Endothelial cell of umbilical vein (primary cell): ENCODE measurements at regions of chr15 and their contacts with region 1.

Region 1: DNA sequence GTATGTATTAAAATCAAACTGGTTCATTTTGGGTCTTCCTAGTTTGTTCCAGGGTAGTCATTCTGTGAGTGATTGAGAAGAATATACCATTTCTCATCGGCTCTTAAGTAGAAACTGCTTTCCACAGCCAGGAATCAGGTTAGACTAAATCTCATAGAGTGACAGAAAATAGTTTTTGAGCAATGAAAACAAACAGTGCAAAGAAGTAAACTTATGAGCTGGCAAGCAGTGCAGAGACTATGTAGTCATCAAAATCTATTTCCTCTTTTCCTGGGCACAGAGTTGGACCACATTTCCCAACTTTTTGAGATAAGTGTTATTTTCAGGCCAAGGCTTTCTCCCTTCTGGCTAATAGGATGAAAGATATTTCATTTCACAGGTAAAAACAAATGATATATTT is 66.5 kb downstream of the UBE3A start:
- DNase-seq: peak; percentile 55
- H3K4me3 ChIP-seq: no peak overlapping the region
- H3K27ac ChIP-seq: no peak overlapping the region
- H3K4me1 ChIP-seq: peaks cover 20% of the 10 kb centered on the region
- H3K27me3 ChIP-seq: no peaks in the 10 kb centered on the region
- CTCF ChIP-seq: no peak
- POLR2A ChIP-seq: no peak

Region 2: DNA sequence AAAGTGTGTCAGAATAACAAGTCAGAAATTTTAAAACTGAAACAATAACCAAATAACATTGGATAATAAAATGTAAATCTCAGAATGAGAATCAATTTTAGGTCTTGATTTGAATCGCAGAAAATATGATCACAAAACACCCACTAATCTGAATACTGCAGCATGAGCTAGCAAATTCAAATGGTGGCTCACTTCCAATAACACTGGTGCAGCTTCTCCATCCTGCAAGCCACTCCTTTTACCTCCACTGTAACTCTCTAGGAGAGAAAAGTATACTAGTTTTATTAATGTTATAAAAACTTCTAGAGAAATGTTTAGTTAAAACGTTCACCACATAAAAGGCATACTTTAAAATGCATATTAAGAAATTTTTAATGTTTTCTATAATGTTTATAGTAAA is 36.1 kb after region 1 on chr15:
- CTCF ChIA-PET with region 1: no interaction called
- POLR2A ChIA-PET with region 1: no interaction called
- dilution Hi-C with region 1: no loop called
- intact Hi-C with region 1: loop called (anchors 5 kb)
- DNase-seq: no peak
- H3K4me3 ChIP-seq: no peak overlapping the region
- H3K27ac ChIP-seq: no peak overlapping the region
- H3K4me1 ChIP-seq: no peaks in the 10 kb centered on the region
- H3K27me3 ChIP-seq: no peaks in the 10 kb centered on the region
- CTCF ChIP-seq: no peak
- POLR2A ChIP-seq: no peak

Region 3: DNA sequence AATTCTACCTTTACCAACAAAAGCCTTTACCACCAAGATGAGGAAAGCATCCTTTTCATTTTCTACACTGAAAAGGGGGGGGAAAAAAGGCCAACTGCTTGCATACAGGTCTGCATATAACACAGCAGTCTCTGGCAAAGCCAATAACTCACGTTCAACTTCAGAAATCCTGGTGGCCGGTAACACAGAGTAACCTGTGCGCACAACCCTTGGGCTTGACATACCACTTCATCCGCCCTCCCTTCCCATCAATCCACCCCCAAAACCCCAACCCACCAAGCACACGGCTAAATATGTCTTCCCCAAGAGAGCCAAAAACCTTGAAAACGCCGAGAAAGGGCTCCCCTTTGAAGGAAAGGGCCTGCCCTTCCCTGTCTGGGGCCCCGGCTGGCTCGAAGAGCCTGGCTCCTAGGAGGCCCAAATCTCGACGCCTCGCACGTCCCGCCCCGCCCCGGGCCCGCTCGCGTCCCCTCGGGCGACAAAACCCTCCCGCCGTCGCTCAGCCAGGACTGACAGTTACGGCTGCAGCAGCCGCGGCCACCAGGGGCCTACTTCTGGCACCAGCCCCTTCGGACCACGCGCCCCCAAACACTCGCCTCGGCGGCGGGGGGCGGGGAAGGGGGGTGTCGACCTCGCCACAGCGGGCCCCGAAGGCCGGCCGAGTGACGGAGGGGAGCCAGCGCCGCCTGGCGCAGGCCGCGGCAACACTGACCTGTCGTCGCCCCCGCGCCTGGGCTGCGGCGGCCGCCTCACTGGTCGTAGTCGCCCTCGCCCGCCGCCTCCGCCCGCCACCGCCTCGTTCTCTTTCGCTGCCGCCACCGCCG is 65.7 kb after region 1 on chr15:
- CTCF ChIA-PET with region 1: no interaction called
- POLR2A ChIA-PET with region 1: no interaction called
- dilution Hi-C with region 1: no loop called
- intact Hi-C with region 1: no loop called
- DNase-seq: peak; percentile 63
- H3K4me3 ChIP-seq: peak overlapping the region; percentile 85 to 97 (median 87)
- H3K27ac ChIP-seq: peak overlapping the region; percentile 85
- H3K4me1 ChIP-seq: peaks cover 16% of the 10 kb centered on the region
- H3K27me3 ChIP-seq: no peaks in the 10 kb centered on the region
- CTCF ChIP-seq: peak; percentile 23 to 49
- POLR2A ChIP-seq: no peak